Heart left ventricle (tissue), 16 donors: ENCODE measurements at regions of chr2 and their contacts with region 1.

Region 1: GRCh38 chr2:8681786-8682692 is at the start of gene ID2:
- DNase-seq: peak; percentile 99 to 100 (median 100)
- ATAC-seq: peak; percentile 82 to 89 (median 87)
- H3K4me3 ChIP-seq: peak within 1 kb of the TSS; percentile 68 to 92 (median 84)
- H3K27ac ChIP-seq: peak within 1 kb of the TSS; percentile 88 to 100 (median 99)
- H3K4me1 ChIP-seq: peaks cover 0 to 50% (median 33%) of the 10 kb centered on the region in 12 donors
- H3K27me3 ChIP-seq: peaks cover 0 to 3% (median 0%) of the 10 kb centered on the region in 9 donors
- CTCF ChIP-seq: no peak
- POLR2A ChIP-seq: peak; percentile 93 to 100
- total RNA-seq, gene ID2: 17.3 to 121 (median 25.5) TPM

Region 2: GRCh38 chr2:7209757-7210555 is 1472.1 kb before region 1 on chr2:
- intact Hi-C with region 1: loop called in 2 of 10 experiments (anchors 5 kb)
- DNase-seq: no peak
- ATAC-seq: no peak
- H3K4me3 ChIP-seq: no peak overlapping the region
- H3K27ac ChIP-seq: no peak overlapping the region
- H3K4me1 ChIP-seq: no peaks in the 10 kb centered on the region
- H3K27me3 ChIP-seq: no peaks in the 10 kb centered on the region
- CTCF ChIP-seq: no peak
- POLR2A ChIP-seq: no peak

Region 3: GRCh38 chr2:8119782-8120505 is 562.1 kb before region 1 on chr2:
- intact Hi-C with region 1: loop called in 1 of 10 experiments (anchors 10 kb)
- DNase-seq: no peak
- ATAC-seq: peak; percentile 34 to 77 (median 64)
- H3K4me3 ChIP-seq: peak overlapping the region in 3 of 12 donors; percentile 1 to 10 (median 9)
- H3K27ac ChIP-seq: peak overlapping the region in 11 of 12 donors; percentile 14 to 73 (median 55)
- H3K4me1 ChIP-seq: peaks cover 0 to 29% (median 14%) of the 10 kb centered on the region in 12 donors
- H3K27me3 ChIP-seq: no peaks in the 10 kb centered on the region
- CTCF ChIP-seq: no peak
- POLR2A ChIP-seq: no peak

Region 4: GRCh38 chr2:8229546-8229986 is 452.5 kb before region 1 on chr2:
- intact Hi-C with region 1: loop called in 6 of 10 experiments (anchors 5 to 10 kb)
- DNase-seq: peak in 4 of 5 donors; percentile 47 to 71 (median 60)
- ATAC-seq: peak; percentile 55 to 78 (median 73)
- H3K4me3 ChIP-seq: no peak overlapping the region
- H3K27ac ChIP-seq: peak overlapping the region in 4 of 12 donors; percentile 4 to 55 (median 19)
- H3K4me1 ChIP-seq: peaks cover 0 to 35% (median 17%) of the 10 kb centered on the region in 12 donors
- H3K27me3 ChIP-seq: no peaks in the 10 kb centered on the region
- CTCF ChIP-seq: no peak
- POLR2A ChIP-seq: no peak

Region 5: DNA sequence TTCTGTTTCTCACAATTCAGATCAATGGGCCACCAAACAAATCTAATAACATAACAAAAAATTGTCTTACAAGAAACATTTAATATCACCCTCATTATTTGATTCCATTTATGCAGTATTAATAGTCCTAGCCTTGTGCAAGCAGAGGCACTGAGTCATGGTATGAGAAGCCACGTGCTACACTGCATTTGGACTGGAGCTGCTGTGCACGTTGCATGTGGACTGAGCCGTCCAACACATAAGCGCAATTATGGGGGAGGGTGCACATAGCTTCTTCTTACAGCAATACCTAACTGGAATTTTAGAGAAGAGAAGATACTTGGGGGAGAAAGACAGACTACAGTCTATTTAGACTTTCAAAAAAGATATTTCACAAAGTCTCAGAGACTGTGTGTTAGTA is 329.7 kb before region 1 on chr2:
- intact Hi-C with region 1: no loop called
- DNase-seq: no peak
- ATAC-seq: no peak
- H3K4me3 ChIP-seq: no peak overlapping the region
- H3K27ac ChIP-seq: no peak overlapping the region
- H3K4me1 ChIP-seq: no peaks in the 10 kb centered on the region
- H3K27me3 ChIP-seq: no peaks in the 10 kb centered on the region
- CTCF ChIP-seq: no peak
- POLR2A ChIP-seq: no peak

Region 6: GRCh38 chr2:8477552-8478470 is 204.2 kb before region 1 on chr2:
- intact Hi-C with region 1: loop called in 5 of 10 experiments (anchors 2 to 10 kb)
- DNase-seq: no peak
- ATAC-seq: no peak
- H3K4me3 ChIP-seq: peak overlapping the region in 1 of 12 donors; percentile 31
- H3K27ac ChIP-seq: peak overlapping the region in 3 of 12 donors; percentile 29 to 82 (median 41)
- H3K4me1 ChIP-seq: peaks cover 0 to 82% (median 26%) of the 10 kb centered on the region in 12 donors
- H3K27me3 ChIP-seq: no peaks in the 10 kb centered on the region
- CTCF ChIP-seq: no peak
- POLR2A ChIP-seq: no peak

Region 7: GRCh38 chr2:8544786-8545694 is 137.0 kb before region 1 on chr2:
- intact Hi-C with region 1: loop called in 1 of 10 experiments (anchors 5 kb)
- DNase-seq: peak; percentile 71 to 87 (median 79)
- ATAC-seq: peak; percentile 72 to 90 (median 86)
- H3K4me3 ChIP-seq: no peak overlapping the region
- H3K27ac ChIP-seq: peak overlapping the region in 6 of 12 donors; percentile 2 to 97 (median 42)
- H3K4me1 ChIP-seq: peaks cover 0 to 71% (median 25%) of the 10 kb centered on the region in 12 donors
- H3K27me3 ChIP-seq: no peaks in the 10 kb centered on the region
- CTCF ChIP-seq: peak; percentile 5 to 57 (median 32)
- POLR2A ChIP-seq: no peak